Heart left ventricle (tissue), 16 donors: ENCODE measurements at regions of chr3 and their contacts with region 1.

Region 1: GRCh38 chr3:191388823-191389222 is 58.5 kb upstream of the UTS2B start:
- DNase-seq: no peak
- ATAC-seq: no peak
- H3K4me3 ChIP-seq: no peak overlapping the region
- H3K27ac ChIP-seq: no peak overlapping the region
- H3K4me1 ChIP-seq: peaks cover 0 to 20% (median 0%) of the 10 kb centered on the region in 12 donors
- H3K27me3 ChIP-seq: no peaks in the 10 kb centered on the region
- CTCF ChIP-seq: peak in 9 of 12 donors; percentile 24 to 50 (median 35)
- POLR2A ChIP-seq: no peak

Region 2: GRCh38 chr3:191136347-191136746 is 252.5 kb before region 1 on chr3:
- intact Hi-C with region 1: loop called in 1 of 10 experiments (anchors 10 kb)
- DNase-seq: no peak
- ATAC-seq: no peak
- H3K4me3 ChIP-seq: no peak overlapping the region
- H3K27ac ChIP-seq: no peak overlapping the region
- H3K4me1 ChIP-seq: peaks cover 0 to 11% (median 0%) of the 10 kb centered on the region in 12 donors
- H3K27me3 ChIP-seq: no peaks in the 10 kb centered on the region
- CTCF ChIP-seq: peak in 10 of 12 donors; percentile 15 to 53 (median 36)
- POLR2A ChIP-seq: no peak

Region 3: GRCh38 chr3:191244242-191244867 is 144.5 kb before region 1 on chr3:
- intact Hi-C with region 1: loop called in 5 of 10 experiments (anchors 5 to 10 kb)
- DNase-seq: no peak
- ATAC-seq: no peak
- H3K4me3 ChIP-seq: no peak overlapping the region
- H3K27ac ChIP-seq: peak overlapping the region in 1 of 12 donors; percentile 30
- H3K4me1 ChIP-seq: peaks cover 0 to 10% (median 0%) of the 10 kb centered on the region in 12 donors
- H3K27me3 ChIP-seq: no peaks in the 10 kb centered on the region
- CTCF ChIP-seq: peak; percentile 30 to 62 (median 48)
- POLR2A ChIP-seq: no peak

Region 4: GRCh38 chr3:191253089-191253799 is 135.6 kb before region 1 on chr3:
- intact Hi-C with region 1: loop called in 3 of 10 experiments (anchors 10 kb)
- DNase-seq: no peak
- ATAC-seq: no peak
- H3K4me3 ChIP-seq: no peak overlapping the region
- H3K27ac ChIP-seq: no peak overlapping the region
- H3K4me1 ChIP-seq: peaks cover 0 to 4% (median 0%) of the 10 kb centered on the region in 12 donors
- H3K27me3 ChIP-seq: no peaks in the 10 kb centered on the region
- CTCF ChIP-seq: no peak
- POLR2A ChIP-seq: no peak

Region 5: GRCh38 chr3:191269289-191270085 is 119.3 kb before region 1 on chr3:
- intact Hi-C with region 1: loop called in 1 of 10 experiments (anchors 10 kb)
- DNase-seq: no peak
- ATAC-seq: no peak
- H3K4me3 ChIP-seq: no peak overlapping the region
- H3K27ac ChIP-seq: no peak overlapping the region
- H3K4me1 ChIP-seq: peaks cover 0 to 3% (median 0%) of the 10 kb centered on the region in 12 donors
- H3K27me3 ChIP-seq: no peaks in the 10 kb centered on the region
- CTCF ChIP-seq: no peak
- POLR2A ChIP-seq: no peak